Heart right ventricle (tissue), 16 donors: ENCODE measurements at regions of chr6 and their contacts with region 1.

Region 1: DNA sequence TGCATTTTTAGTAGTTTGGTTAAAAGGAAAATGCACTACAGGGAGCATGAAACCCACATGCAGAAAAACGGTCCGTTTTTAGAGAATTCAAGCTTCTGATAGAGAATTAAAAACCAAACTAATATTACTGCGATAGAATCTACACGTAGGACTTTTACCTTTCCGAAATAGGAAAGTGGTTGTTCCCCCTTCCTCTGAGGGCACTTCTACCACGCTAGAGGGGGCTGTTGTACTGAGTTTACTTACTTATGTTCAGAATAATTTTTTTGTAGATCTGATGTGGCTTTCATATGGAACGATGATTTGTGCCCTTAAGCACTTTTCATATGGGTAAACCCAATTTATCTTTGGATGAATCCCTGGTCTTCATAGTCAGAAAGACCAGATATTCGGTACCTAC is 264.3 kb upstream of the PLN start:
- DNase-seq: peak in 1 of 2 donors; percentile 73
- ATAC-seq: peak in 7 of 8 donors; percentile 29 to 68 (median 57)
- H3K4me3 ChIP-seq: peak overlapping the region in 1 of 10 donors; percentile 25
- H3K27ac ChIP-seq: peak overlapping the region in 2 of 10 donors; percentile 80 to 83
- H3K4me1 ChIP-seq: peaks cover 0 to 50% (median 9%) of the 10 kb centered on the region in 9 donors
- H3K27me3 ChIP-seq: no peaks in the 10 kb centered on the region
- CTCF ChIP-seq: peak; percentile 59 to 89 (median 82)

Region 2: DNA sequence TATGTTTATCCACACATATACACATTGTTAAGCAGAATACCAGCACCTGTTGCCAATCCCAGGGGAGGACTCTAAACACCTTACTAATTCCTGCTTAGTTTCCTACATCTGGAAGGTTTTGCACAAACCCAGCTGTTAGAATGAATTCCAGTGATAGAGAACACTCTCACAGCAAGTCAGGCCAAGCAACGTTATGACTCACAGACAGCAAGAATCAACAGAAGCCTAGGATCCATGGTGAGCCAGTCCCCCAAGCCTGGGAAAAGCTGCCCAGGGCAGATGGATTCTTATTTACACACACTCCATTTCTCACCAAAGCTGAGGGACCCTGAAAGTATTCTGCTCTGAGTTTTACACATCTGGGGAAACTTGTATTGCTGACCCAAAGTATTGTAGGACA is 85.0 kb before region 1 on chr6:
- intact Hi-C with region 1: no loop called
- DNase-seq: no peak
- ATAC-seq: no peak
- H3K4me3 ChIP-seq: no peak overlapping the region
- H3K27ac ChIP-seq: no peak overlapping the region
- H3K4me1 ChIP-seq: peaks cover 0 to 2% (median 0%) of the 10 kb centered on the region in 9 donors
- H3K27me3 ChIP-seq: no peaks in the 10 kb centered on the region
- CTCF ChIP-seq: no peak

Region 3: DNA sequence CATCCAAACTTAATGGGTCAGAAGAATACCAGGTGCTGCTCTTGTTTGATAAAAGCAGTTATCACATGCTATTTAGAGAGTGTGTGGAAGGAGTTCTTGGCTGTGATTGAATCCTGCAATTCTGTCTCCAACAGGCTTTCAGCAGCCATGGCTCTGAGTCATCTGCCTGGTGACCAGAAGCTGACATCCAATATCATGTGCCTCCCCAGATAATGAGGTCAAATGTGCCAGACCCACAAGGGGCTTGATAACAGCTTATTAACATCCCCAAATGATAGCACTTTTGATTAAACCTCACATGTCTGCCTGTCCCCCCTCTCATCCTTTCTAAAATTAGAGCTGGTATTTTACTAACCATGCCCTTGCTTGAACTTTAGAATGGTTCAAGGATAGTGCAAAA is 88.6 kb after region 1 on chr6:
- intact Hi-C with region 1: loop called in 2 of 10 experiments (anchors 2 to 5 kb)
- DNase-seq: peak; percentile 21 to 77
- ATAC-seq: peak; percentile 84 to 95 (median 90)
- H3K4me3 ChIP-seq: no peak overlapping the region
- H3K27ac ChIP-seq: peak overlapping the region; percentile 4 to 87 (median 80)
- H3K4me1 ChIP-seq: peaks cover 0 to 25% (median 6%) of the 10 kb centered on the region in 9 donors
- H3K27me3 ChIP-seq: no peaks in the 10 kb centered on the region
- CTCF ChIP-seq: no peak

Region 4: GRCh38 chr6:118514689-118515088 is 230.9 kb after region 1 on chr6:
- intact Hi-C with region 1: loop called in 7 of 10 experiments (anchors 1 to 10 kb)
- DNase-seq: peak in 1 of 2 donors; percentile 75
- ATAC-seq: peak; percentile 93 to 99 (median 98)
- H3K4me3 ChIP-seq: no peak overlapping the region
- H3K27ac ChIP-seq: peak overlapping the region in 9 of 10 donors; percentile 44 to 83 (median 79)
- H3K4me1 ChIP-seq: peaks cover 0 to 42% (median 3%) of the 10 kb centered on the region in 9 donors
- H3K27me3 ChIP-seq: no peaks in the 10 kb centered on the region
- CTCF ChIP-seq: no peak

Region 5: DNA sequence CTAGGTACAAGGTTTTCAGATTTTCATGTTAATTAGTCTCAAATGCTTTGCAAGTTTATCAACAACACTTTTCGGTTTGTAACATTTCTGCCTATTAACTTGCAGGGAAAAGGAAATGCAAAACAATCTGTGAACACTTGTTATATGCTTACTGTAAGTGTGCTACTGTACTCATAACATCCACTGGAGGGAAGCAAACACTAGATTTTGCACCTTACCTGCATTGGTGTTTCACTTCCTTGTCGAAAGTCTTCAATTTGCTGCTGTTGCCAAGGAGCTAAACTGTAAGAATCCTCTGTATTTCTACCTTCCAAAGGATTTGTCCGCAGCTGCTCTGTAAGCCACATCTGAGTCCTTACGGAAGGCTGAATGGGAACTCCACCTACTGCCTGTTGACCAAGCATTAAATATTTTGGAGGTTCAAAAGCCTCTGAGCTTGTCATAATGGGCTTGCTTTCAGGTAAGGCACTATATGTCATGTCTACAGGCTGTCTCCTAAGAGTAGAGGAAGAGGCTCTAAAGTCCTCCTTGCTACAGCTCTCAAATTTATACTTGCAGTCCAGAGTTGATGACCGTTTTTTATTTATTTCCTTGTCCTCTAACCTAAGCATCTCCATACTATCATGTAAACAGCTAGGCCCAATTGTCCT is 281.7 kb after region 1 on chr6:
- intact Hi-C with region 1: loop called in 1 of 10 experiments (anchors 5 kb)
- DNase-seq: no peak
- ATAC-seq: peak in 5 of 8 donors; percentile 34 to 52 (median 37)
- H3K4me3 ChIP-seq: no peak overlapping the region
- H3K27ac ChIP-seq: no peak overlapping the region
- H3K4me1 ChIP-seq: peaks cover 0 to 16% (median 8%) of the 10 kb centered on the region in 9 donors
- H3K27me3 ChIP-seq: no peaks in the 10 kb centered on the region
- CTCF ChIP-seq: peak; percentile 4 to 56 (median 33)

Region 6: GRCh38 chr6:118618679-118619377 is 335.1 kb after region 1 on chr6:
- intact Hi-C with region 1: loop called in 8 of 10 experiments (anchors 2 to 10 kb)
- DNase-seq: peak; percentile 58 to 60
- ATAC-seq: peak; percentile 50 to 83 (median 81)
- H3K4me3 ChIP-seq: no peak overlapping the region
- H3K27ac ChIP-seq: no peak overlapping the region
- H3K4me1 ChIP-seq: peaks cover 0 to 45% (median 21%) of the 10 kb centered on the region in 9 donors
- H3K27me3 ChIP-seq: no peaks in the 10 kb centered on the region
- CTCF ChIP-seq: peak; percentile 68 to 90 (median 88)

Region 7: GRCh38 chr6:118776607-118777549 is 493.1 kb after region 1 on chr6:
- intact Hi-C with region 1: loop called in 6 of 10 experiments (anchors 5 to 10 kb)
- DNase-seq: peak in 1 of 2 donors; percentile 72
- ATAC-seq: peak in 7 of 8 donors; percentile 59 to 92 (median 73)
- H3K4me3 ChIP-seq: peak overlapping the region in 4 of 10 donors; percentile 20 to 29 (median 28)
- H3K27ac ChIP-seq: no peak overlapping the region
- H3K4me1 ChIP-seq: peaks cover 0 to 26% (median 13%) of the 10 kb centered on the region in 9 donors
- H3K27me3 ChIP-seq: no peaks in the 10 kb centered on the region
- CTCF ChIP-seq: peak; percentile 55 to 87 (median 78)